OCI-LY7 (cell line): ENCODE measurements at regions of chr12 and their contacts with region 1.

Region 1: GRCh38 chr12:107736914-107737313 is 24.0 kb downstream of the PRDM4 start:
- DNase-seq: peak; percentile 86
- H3K4me3 ChIP-seq: peak overlapping the region; percentile 7
- H3K27ac ChIP-seq: peak overlapping the region; percentile 32
- H3K4me1 ChIP-seq: peaks cover 21% of the 10 kb centered on the region
- CTCF ChIP-seq: peak; percentile 70

Region 2: GRCh38 chr12:107702106-107702505 is 34.8 kb before region 1 on chr12:
- CTCF ChIA-PET with region 1: no interaction called
- POLR2A ChIA-PET with region 1: no interaction called
- intact Hi-C with region 1: no loop called
- DNase-seq: no peak
- H3K4me3 ChIP-seq: no peak overlapping the region
- H3K27ac ChIP-seq: no peak overlapping the region
- H3K4me1 ChIP-seq: peaks cover 6% of the 10 kb centered on the region
- CTCF ChIP-seq: no peak

Region 3: DNA sequence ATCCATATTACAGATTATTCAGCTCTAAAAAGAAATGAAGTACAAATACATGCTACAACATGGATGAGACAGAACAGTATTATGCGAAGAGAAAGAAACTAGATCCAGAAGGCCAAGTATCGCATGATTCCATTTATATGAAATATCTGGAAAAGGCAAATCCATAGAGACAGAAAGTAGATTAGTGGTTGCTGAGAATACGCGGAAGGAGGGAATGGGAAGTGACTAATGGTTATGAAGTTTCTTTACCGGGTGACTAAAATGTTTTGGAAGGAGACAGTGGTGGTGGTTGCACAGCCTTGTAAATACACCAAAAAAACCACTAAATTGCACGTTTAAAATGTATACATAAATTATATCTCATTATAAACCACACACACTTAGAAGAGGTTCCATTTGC is 11.6 kb after region 1 on chr12:
- CTCF ChIA-PET with region 1: no interaction called
- POLR2A ChIA-PET with region 1: interaction called, 3 read pairs
- intact Hi-C with region 1: loop called (anchors 1 kb)
- DNase-seq: no peak
- H3K4me3 ChIP-seq: no peak overlapping the region
- H3K27ac ChIP-seq: no peak overlapping the region
- H3K4me1 ChIP-seq: no peaks in the 10 kb centered on the region
- CTCF ChIP-seq: no peak